ENCODE measurements at regions of chr9 and their contacts with region 1.

Region 1: DNA sequence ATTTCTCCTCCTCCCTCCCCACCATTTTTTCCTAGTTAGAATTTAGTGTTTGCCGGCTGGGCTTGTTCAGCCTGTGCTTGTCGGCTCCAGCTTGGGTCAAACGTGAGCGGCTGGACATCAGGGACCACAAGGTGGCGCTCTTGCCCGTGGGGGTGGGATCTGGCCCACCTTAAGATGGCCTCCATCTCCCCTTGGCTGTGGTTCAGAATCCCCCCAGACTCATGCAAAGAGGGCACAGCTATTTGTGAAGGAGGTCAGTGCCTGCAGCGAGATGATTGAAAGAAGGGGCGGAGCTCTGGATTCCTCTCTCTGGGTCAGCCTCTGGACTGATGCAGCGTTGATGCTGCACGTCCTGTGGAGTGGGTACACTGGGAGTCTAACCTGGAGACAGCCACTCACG is 283.3 kb upstream of the TUT7 start:
- DNase-seq: peak; percentile 86
- ATAC-seq: peak; percentile 91
- H3K4me3 Mint-ChIP-seq: no peak overlapping the region
- H3K27ac Mint-ChIP-seq: no peak overlapping the region
- H3K4me1 Mint-ChIP-seq: peaks cover 11% of the 10 kb centered on the region
- H3K27me3 Mint-ChIP-seq: no peaks in the 10 kb centered on the region; the same call in 1 of the 2 replicates
- CTCF ChIP-seq: peak; percentile 85

Region 2: GRCh38 chr9:86434039-86434726 is 203.3 kb before region 1 on chr9:
- CTCF ChIA-PET with region 1: interaction called, 15 read pairs
- POLR2A ChIA-PET with region 1: no interaction called
- DNase-seq: no peak
- ATAC-seq: peak; percentile 46; the same call in 1 of the 2 replicates
- H3K4me3 Mint-ChIP-seq: peak overlapping the region; percentile 28; the same call in 1 of the 2 replicates
- H3K27ac Mint-ChIP-seq: no peak overlapping the region
- H3K4me1 Mint-ChIP-seq: peaks cover 15% of the 10 kb centered on the region
- H3K27me3 Mint-ChIP-seq: no peaks in the 10 kb centered on the region; the same call in 1 of the 2 replicates
- CTCF ChIP-seq: no peak

Region 3: GRCh38 chr9:86486891-86487837 is 150.4 kb before region 1 on chr9:
- CTCF ChIA-PET with region 1: interaction called, 11 read pairs
- POLR2A ChIA-PET with region 1: no interaction called
- DNase-seq: no peak
- ATAC-seq: peak; percentile 61
- H3K4me3 Mint-ChIP-seq: no peak overlapping the region
- H3K27ac Mint-ChIP-seq: no peak overlapping the region
- H3K4me1 Mint-ChIP-seq: peaks cover 4% of the 10 kb centered on the region; the same call in 1 of the 2 replicates
- H3K27me3 Mint-ChIP-seq: no peaks in the 10 kb centered on the region; the same call in 1 of the 2 replicates
- CTCF ChIP-seq: peak; percentile 33; the same call in 1 of the 2 replicates

Region 4: DNA sequence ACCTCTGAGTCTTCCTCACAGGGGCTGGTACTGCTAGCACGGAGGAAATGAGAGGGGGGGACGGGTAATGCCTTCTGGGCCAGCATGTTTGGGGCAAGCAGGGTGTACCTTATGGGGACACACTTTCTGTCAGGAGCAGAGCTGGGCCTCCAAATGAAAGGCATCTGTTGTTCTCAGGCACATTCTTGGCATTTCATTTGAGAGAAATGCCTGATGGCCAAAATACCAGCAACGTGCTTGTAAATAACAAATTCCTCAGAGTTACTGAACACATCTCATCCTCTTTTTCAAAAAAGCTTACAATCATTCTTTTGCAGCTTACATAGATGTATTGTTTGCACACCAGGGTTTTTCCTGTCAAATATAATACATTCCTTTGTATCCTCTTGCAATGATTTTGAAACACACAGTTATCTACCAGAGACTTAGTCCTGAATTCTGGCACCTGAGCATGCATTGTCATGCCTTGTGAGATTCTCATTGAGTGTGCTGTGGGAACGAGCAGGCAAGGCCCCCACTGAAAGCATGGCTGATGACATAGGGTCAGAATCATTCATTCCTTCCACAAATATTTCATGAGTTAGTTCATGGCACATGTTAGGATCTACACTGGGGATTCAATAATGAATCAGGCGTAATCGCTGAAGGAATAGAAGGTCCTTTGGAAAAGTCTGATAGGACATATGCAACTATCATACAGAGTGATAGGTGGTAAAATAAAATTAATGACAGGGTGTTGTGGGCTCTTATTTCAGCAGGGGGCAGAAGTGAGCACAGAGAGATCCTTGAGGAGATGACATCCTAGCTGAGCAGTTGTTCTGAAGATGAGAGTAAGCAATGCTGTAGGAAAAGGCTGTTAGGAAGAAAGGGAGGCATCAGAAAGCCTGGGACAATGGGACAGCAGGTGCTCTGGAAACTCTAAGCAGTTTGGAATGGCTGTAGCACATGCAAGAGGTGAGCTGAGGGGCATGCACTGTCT is 22.4 kb before region 1 on chr9:
- CTCF ChIA-PET with region 1: interaction called, 11 read pairs
- POLR2A ChIA-PET with region 1: no interaction called
- DNase-seq: peak; percentile 24
- ATAC-seq: peak; percentile 83
- H3K4me3 Mint-ChIP-seq: no peak overlapping the region
- H3K27ac Mint-ChIP-seq: no peak overlapping the region; the same call in 1 of the 2 replicates
- H3K4me1 Mint-ChIP-seq: peaks cover 33% of the 10 kb centered on the region
- H3K27me3 Mint-ChIP-seq: peaks cover 26% of the 10 kb centered on the region
- CTCF ChIP-seq: peak; percentile 46; the same call in 1 of the 2 replicates

Region 5: GRCh38 chr9:86624630-86625029 is 12.9 kb before region 1 on chr9:
- CTCF ChIA-PET with region 1: interaction called, 10 read pairs
- POLR2A ChIA-PET with region 1: no interaction called
- DNase-seq: no peak
- ATAC-seq: no peak
- H3K4me3 Mint-ChIP-seq: no peak overlapping the region
- H3K27ac Mint-ChIP-seq: no peak overlapping the region
- H3K4me1 Mint-ChIP-seq: peaks cover 18% of the 10 kb centered on the region
- H3K27me3 Mint-ChIP-seq: no peaks in the 10 kb centered on the region; the same call in 1 of the 2 replicates
- CTCF ChIP-seq: no peak

Region 6: DNA sequence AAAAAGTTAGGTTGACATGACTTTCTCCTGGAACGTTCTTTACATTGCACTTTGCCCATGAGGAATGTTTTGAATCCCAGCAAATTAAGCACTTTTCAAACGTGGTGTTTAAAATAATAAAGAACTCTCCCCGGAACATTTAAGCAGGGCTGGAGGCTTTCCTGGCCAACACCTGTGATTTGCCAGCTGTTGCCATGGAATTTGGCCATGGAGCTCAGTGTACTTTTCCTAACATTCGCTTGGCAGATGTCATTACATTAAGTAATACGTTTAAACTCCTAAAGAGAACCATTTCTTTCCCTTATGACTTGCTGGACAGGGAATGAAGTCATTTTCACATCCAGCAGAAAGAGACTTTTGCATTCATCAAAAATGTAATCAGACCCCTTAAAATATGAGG is 163.7 kb after region 1 on chr9:
- CTCF ChIA-PET with region 1: interaction called, 19 read pairs
- POLR2A ChIA-PET with region 1: no interaction called
- DNase-seq: no peak
- ATAC-seq: peak; percentile 24; the same call in 1 of the 2 replicates
- H3K4me3 Mint-ChIP-seq: no peak overlapping the region
- H3K27ac Mint-ChIP-seq: peak overlapping the region; percentile 44; the same call in 1 of the 2 replicates
- H3K4me1 Mint-ChIP-seq: peaks cover 27% of the 10 kb centered on the region
- H3K27me3 Mint-ChIP-seq: peaks cover 2% of the 10 kb centered on the region; the same call in 1 of the 2 replicates
- CTCF ChIP-seq: no peak

Region 7: DNA sequence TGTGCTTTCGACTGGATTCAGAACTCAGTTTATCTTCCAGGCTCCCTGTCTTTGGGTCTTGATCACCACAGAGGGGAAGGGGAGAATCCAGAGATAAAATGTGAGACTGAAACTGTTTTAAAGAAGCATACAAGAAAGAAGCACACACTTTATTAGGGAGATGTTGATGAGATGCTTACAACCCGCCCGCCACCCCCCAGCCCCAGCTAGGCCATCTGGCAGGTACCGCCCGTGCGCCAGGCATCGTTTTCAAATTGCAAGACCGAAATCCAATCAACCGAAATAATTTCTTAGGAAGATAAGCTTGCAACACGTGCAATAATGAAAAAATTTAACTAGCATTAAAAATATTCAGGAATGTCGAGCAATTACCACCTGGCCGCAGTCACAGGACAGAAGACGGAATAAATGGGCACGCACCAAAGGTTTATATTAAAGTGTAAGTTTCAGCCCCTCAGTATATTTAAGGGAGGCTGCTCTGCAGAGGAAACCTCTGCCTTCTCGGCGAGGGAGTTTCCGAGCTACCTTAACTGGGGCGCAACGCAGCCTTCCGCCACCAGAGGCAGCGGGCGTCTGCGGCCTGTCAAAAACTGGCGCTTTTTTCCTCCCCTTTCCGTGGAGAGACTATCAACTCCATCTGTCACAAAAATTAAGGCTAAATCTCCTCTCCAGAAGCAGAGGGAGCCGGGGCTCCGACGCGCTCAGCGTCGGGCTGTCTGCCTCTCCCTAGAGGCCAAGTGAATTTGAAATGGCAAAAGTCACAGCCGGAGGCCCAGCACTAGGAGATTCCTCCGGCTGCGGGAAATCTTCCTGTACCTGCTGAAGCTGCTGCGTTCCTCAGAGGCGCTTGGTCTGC is 310.8 kb after region 1 on chr9:
- CTCF ChIA-PET with region 1: interaction called, 31 read pairs
- POLR2A ChIA-PET with region 1: no interaction called
- DNase-seq: peak; percentile 80
- ATAC-seq: peak; percentile 26
- H3K4me3 Mint-ChIP-seq: peak overlapping the region; percentile 82
- H3K27ac Mint-ChIP-seq: no peak overlapping the region
- H3K4me1 Mint-ChIP-seq: peaks cover 34% of the 10 kb centered on the region
- H3K27me3 Mint-ChIP-seq: peaks cover 53% of the 10 kb centered on the region
- CTCF ChIP-seq: peak; percentile 69